Thyroid gland (tissue), 4 donors: ENCODE measurements at regions of chr6 and their contacts with region 1.

Region 1: GRCh38 chr6:138428944-138429598 is 25.0 kb downstream of the HEBP2 start:
- DNase-seq: no peak
- H3K4me3 ChIP-seq: no peak overlapping the region
- H3K27ac ChIP-seq: no peak overlapping the region
- H3K4me1 ChIP-seq: no peaks in the 10 kb centered on the region
- H3K27me3 ChIP-seq: no peaks in the 10 kb centered on the region
- CTCF ChIP-seq: peak in 5 of 6 experiments; percentile 42 to 82 (median 64)
- POLR2A ChIP-seq: no peak

Region 2: GRCh38 chr6:138512609-138513008 is 83.5 kb after region 1 on chr6:
- intact Hi-C with region 1: loop called (anchors 2 kb)
- DNase-seq: no peak
- H3K4me3 ChIP-seq: no peak overlapping the region
- H3K27ac ChIP-seq: no peak overlapping the region
- H3K4me1 ChIP-seq: no peaks in the 10 kb centered on the region
- H3K27me3 ChIP-seq: no peaks in the 10 kb centered on the region
- CTCF ChIP-seq: no peak
- POLR2A ChIP-seq: no peak

Region 3: DNA sequence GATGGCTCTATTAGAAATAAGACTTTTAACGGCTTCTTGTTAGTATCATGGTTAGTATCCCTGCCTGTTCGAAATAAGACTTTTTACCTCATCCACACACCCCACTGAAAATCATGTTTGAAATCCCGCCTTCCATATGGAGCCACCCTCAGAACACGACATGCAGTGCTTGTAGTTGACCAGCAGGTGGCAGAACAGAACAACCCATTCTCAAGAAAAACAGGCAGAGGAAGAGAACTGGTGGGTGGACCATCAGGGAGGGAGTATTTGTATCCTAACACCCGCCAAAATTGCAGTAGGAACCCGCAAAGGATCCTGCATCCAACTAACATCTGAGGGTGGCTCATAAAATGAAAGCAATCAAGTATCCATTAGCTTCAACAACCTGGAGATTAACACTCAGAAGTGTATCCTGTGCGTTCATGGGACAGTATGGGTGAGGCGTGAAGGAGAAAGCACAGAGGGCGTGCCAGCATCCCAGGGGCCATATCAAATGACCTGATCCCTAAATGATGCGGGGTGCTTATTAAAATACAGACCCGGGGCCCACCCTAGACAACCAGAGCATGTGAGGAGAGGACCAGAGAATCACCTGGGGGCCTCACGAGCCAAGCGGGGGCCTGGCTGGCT is 159.8 kb after region 1 on chr6:
- intact Hi-C with region 1: loop called (anchors 5 kb)
- DNase-seq: peak; percentile 31 to 45
- H3K4me3 ChIP-seq: no peak overlapping the region
- H3K27ac ChIP-seq: no peak overlapping the region
- H3K4me1 ChIP-seq: peaks cover 0 to 3% of the 10 kb centered on the region in 2 donors
- H3K27me3 ChIP-seq: no peaks in the 10 kb centered on the region
- CTCF ChIP-seq: peak; percentile 77 to 91 (median 85)
- POLR2A ChIP-seq: no peak

Region 4: DNA sequence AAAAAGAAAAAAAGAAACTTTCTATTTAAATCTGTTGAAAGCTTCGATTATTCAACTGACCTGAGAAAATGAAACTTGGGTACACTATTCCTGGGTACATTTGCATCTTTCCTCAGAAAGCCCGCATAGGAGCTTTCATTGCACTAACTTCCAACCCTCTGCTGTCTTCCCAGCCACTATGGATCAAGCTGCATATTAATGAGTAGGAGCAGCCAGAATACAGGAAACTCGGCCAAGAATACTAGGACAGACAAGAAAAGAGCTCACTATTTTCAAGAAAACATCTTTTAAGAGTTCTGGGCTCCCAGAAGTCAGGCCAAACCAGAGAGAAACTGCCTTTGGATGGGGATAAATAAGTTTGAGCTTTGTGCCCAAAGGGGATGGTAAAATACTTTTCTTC is 209.5 kb after region 1 on chr6:
- intact Hi-C with region 1: no loop called
- DNase-seq: no peak
- H3K4me3 ChIP-seq: no peak overlapping the region
- H3K27ac ChIP-seq: no peak overlapping the region
- H3K4me1 ChIP-seq: no peaks in the 10 kb centered on the region
- H3K27me3 ChIP-seq: no peaks in the 10 kb centered on the region
- CTCF ChIP-seq: no peak
- POLR2A ChIP-seq: no peak